Activated B cell treated with CpG ODN at 0.5 μM for 24 hours (primary cell): ENCODE measurements at regions of chr2 and their contacts with region 1.

Region 1: DNA sequence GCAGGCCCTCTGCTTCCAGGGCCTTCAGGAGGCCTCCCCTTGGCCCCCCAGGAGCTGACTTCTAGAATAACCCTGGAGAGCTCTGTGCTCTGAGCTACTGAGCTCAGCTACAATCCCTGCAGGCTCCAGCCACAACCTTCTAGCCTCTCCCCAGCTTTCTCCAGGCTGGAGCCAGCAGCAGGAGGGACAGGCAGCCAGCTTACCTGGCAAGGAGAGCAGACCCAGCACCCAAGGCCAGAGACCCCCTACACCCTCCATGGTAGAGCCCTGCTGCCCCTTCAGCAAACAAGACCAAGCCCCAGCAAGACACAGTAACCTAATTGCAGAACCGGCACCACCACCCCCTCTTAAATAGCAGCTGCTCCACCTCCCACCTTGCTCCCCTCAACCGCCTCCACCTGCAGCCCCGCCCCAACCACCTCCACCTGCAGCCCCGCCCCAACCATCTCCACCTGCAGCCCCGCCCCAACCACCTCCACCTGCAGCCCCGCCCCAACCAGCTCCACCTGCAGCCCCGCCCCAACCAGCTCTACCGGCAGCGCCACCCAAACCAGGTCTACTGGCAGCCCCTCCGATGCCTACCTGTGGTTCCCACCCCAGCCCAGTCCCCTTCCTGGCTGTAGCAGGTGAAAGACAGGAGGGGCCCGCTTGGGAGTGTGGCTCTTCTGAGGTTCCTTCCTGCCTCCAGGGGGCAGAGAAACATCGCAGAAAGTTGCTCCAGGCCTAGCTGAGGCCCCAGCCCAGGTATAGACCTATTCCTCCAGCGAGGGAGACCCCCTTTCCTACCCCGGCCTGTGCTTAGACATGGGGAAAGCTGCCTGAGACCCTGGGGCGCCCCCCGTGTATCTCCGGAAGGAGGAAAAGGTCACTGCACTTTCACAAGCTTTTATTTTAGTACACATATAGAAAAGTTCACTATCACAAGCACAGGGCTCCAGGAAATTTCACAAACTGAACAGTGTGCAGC is at the start of gene ASTL:
- DNase-seq: peak; percentile 53
- ATAC-seq: peak; percentile 73
- H3K4me3 Mint-ChIP-seq: peak within 1 kb of the TSS; percentile 38
- H3K27ac Mint-ChIP-seq: peak within 1 kb of the TSS; percentile 35
- H3K4me1 Mint-ChIP-seq: peaks cover 37% of the 10 kb centered on the region
- H3K27me3 Mint-ChIP-seq: no peaks in the 10 kb centered on the region
- CTCF ChIP-seq: no peak
- total RNA-seq, gene ASTL: 1.0 and 1.6 TPM in 2 replicates

Region 2: GRCh38 chr2:96157651-96158553 is 19.4 kb after region 1 on chr2:
- CTCF ChIA-PET with region 1: interaction called, 22 read pairs
- POLR2A ChIA-PET with region 1: interaction called, 534 read pairs
- intact Hi-C with region 1: no loop called
- DNase-seq: peak; percentile 62
- ATAC-seq: peak; percentile 61
- H3K4me3 Mint-ChIP-seq: peak overlapping the region; percentile 69
- H3K27ac Mint-ChIP-seq: peak overlapping the region; percentile 85
- H3K4me1 Mint-ChIP-seq: peaks cover 70% of the 10 kb centered on the region
- H3K27me3 Mint-ChIP-seq: no peaks in the 10 kb centered on the region
- CTCF ChIP-seq: no peak

Region 3: GRCh38 chr2:96180521-96180920 is 42.1 kb after region 1 on chr2:
- CTCF ChIA-PET with region 1: interaction called, 511 read pairs
- POLR2A ChIA-PET with region 1: interaction called, 534 read pairs
- intact Hi-C with region 1: no loop called
- DNase-seq: no peak
- ATAC-seq: no peak
- H3K4me3 Mint-ChIP-seq: no peak overlapping the region
- H3K27ac Mint-ChIP-seq: no peak overlapping the region
- H3K4me1 Mint-ChIP-seq: peaks cover 2% of the 10 kb centered on the region
- H3K27me3 Mint-ChIP-seq: no peaks in the 10 kb centered on the region
- CTCF ChIP-seq: no peak

Region 4: GRCh38 chr2:96254571-96254970 is 116.1 kb after region 1 on chr2:
- CTCF ChIA-PET with region 1: interaction called, 16 read pairs
- POLR2A ChIA-PET with region 1: interaction called, 11 read pairs
- intact Hi-C with region 1: no loop called
- DNase-seq: no peak
- ATAC-seq: no peak
- H3K4me3 Mint-ChIP-seq: no peak overlapping the region
- H3K27ac Mint-ChIP-seq: no peak overlapping the region
- H3K4me1 Mint-ChIP-seq: peaks cover 50% of the 10 kb centered on the region
- H3K27me3 Mint-ChIP-seq: no peaks in the 10 kb centered on the region
- CTCF ChIP-seq: no peak